ENCODE measurements at regions of chr4 and their contacts with region 1.

Region 1: DNA sequence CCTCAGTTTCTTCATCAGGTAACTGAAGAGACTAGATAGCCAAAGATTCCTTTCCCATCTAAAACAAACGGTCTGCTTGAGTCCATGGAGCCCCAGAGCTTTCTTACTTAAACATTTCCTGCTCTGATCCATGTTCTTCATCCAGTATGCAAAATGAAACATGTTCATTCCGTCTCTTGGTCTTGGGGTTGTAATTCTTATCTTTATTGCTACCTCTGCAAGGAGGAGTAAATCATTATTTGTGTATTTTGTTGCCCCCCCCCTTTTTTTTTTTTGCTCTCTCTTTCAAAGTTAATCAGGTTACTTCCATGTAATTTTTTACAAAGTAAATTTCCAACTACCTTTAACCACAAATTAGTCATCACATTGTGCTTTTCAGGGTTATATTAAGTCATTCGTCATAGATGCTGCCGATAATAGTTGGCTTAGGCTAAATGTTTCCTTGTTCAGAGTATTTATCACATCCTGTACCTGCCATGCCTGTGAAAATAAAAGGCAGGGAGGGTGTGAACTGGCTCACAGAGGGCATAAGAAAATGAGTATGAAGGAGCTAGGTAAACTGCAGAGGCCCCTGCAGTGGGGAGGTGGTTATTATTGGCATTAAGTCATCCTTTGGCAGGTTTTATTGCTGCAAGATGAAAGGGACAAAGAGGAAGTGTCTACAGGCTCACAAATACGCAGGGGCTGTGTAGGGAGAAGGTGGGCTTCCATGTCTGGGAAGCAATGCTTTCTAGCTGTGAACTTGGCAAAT is 76.7 kb upstream of the HS3ST1 start:
- DNase-seq: peak; percentile 11
- H3K4me3 Mint-ChIP-seq: no peak overlapping the region
- H3K27ac Mint-ChIP-seq: peak overlapping the region; percentile 58
- H3K4me1 Mint-ChIP-seq: peaks cover 32% of the 10 kb centered on the region
- H3K27me3 Mint-ChIP-seq: peaks cover 2% of the 10 kb centered on the region

Region 2: DNA sequence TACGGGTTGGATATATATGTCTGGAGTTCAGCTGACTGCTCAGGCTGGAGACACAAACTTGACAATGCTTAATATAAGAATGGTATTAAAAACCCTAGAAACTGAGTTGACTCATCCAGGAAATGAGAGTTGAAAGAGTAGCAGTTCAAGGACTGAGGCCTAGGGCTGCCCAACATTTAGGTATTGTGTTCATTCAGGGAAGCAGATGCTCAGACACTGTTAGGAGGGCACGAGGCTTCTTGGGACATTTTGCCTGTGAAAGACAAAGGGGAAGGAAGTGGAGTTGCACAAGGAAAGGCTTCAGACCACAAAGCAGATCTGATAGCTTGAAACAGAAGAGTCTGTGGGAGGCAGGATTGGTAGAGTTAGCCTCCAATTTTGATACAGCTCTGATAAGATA is 24.7 kb before region 1 on chr4:
- intact Hi-C with region 1: loop called (anchors 2 kb)
- DNase-seq: no peak
- H3K4me3 Mint-ChIP-seq: no peak overlapping the region
- H3K27ac Mint-ChIP-seq: no peak overlapping the region
- H3K4me1 Mint-ChIP-seq: peaks cover 14% of the 10 kb centered on the region
- H3K27me3 Mint-ChIP-seq: peaks cover 2% of the 10 kb centered on the region